ENCODE measurements at regions of chr2 and their contacts with region 1.

Region 1: DNA sequence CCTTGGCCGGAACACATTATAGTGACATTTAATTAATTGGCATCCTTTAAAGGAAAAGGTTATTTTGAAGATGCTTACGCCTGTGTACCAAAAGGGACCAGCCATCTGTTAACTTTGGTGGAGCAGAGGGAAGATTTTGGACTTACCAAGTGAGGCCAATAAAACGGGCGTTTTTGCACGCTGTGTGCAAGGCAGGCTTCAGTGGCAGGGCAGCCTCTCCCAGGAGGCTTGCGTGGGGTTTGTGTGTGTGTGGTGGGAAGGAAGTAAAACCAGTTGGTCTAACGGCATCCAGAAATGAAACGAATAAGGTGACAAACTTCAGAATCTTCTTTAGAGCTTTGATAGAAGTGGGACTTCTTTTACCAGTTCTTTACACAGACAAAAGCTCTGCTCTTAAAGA is 191.7 kb downstream of the PRKCE start:
- DNase-seq: no peak
- ATAC-seq: peak; percentile 76
- H3K4me3 ChIP-seq: peak overlapping the region; percentile 35; the same call in 1 of the 2 replicates
- H3K27ac ChIP-seq: peak overlapping the region; percentile 94
- H3K4me1 ChIP-seq: peaks cover 70% of the 10 kb centered on the region
- H3K27me3 ChIP-seq: no peaks in the 10 kb centered on the region
- CTCF ChIP-seq: no peak
- EP300 ChIP-seq: peak; percentile 91 to 97
- POLR2A ChIP-seq: no peak
- RAD21 ChIP-seq: no peak

Region 2: DNA sequence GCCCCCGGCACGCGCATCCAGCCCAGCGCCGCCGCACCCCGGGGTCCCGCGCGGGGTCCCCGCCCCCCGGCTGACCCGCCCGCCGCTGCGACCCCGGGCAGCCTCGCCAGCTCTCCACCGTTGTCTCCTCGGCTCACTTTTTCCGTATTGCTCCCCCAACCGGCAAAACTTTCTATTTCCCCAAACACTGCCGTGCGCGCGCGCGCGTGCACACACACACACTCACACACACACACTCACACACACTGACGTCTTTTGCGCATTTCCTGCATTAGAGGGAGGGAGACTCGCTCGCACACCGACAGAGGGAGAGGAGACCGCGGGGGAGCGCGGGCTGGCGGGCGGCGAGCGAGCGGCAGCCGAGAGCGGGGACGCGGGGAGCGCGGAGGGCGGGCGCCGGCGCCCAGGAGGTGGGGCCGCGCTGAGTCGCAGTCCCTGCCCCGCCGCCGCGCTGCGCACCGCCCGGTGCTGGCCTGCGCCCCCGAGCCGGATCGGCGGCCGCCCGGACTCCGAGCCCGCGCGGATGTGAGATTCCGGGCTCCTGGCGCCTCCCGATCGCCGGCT is 192.2 kb before region 1 on chr2:
- CTCF ChIA-PET with region 1: interaction called, 10 read pairs
- POLR2A ChIA-PET with region 1: interaction called, 51 read pairs
- RAD21 ChIA-PET with region 1: interaction called, 60 read pairs
- SMC1A ChIA-PET with region 1: interaction called, 110 read pairs
- in situ Hi-C with region 1: no loop called
- intact Hi-C with region 1: no loop called
- DNase-seq: peak; percentile 76
- ATAC-seq: peak; percentile 79
- H3K4me3 ChIP-seq: peak overlapping the region; percentile 97
- H3K27ac ChIP-seq: peak overlapping the region; percentile 91
- H3K4me1 ChIP-seq: no peaks in the 10 kb centered on the region
- H3K27me3 ChIP-seq: no peaks in the 10 kb centered on the region
- CTCF ChIP-seq: peak; percentile 38 to 49 (median 48); a peak in 5 of 6 replicates
- EP300 ChIP-seq: peak; percentile 56 to 69; a peak in 1 of 4 replicates
- POLR2A ChIP-seq: peak; percentile 85
- RAD21 ChIP-seq: peak; percentile 57

Region 3: DNA sequence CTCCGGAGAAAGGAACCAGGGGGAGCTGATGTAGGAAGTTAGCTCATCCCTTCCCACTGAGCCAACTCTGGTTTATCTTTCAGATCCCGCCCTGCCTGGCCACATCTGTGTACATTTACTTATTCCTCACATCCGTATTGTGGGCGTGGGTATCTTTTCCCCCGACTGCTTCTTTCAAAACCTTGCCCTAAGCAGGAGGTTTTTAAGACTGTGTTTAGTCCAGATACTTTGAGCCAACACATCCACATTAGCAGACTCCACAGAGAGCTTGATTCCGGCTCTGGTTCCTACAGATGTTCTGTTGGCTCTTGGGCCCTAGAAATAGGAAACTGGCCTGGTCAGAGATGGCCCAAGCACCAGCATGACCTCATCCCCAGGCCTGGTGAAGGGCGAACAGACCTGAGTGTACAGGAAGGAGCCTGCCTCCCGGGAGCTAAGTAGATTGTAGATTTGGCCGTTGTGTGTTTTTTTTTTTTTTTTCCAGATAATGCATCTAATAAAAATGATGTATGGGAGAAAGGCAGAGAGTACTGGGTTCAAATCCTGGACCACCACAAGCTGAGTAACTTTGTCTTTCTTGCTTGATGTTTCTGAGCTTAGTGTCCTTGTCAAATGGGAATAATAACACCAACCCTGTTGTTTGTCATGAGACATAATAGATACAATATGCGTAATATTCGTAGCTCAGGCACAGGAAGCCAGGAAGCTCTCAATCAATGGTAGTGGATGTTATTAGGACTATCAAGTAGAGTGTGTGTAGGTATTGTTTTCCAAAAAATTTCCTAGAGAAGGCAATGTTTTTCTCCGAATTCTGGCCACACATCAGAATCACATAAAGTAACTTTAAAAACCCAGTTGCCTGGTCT is 99.4 kb before region 1 on chr2:
- CTCF ChIA-PET with region 1: no interaction called
- POLR2A ChIA-PET with region 1: no interaction called
- RAD21 ChIA-PET with region 1: no interaction called
- SMC1A ChIA-PET with region 1: no interaction called
- in situ Hi-C with region 1: no loop called
- intact Hi-C with region 1: no loop called
- DNase-seq: no peak
- ATAC-seq: no peak
- H3K4me3 ChIP-seq: no peak overlapping the region
- H3K27ac ChIP-seq: no peak overlapping the region
- H3K4me1 ChIP-seq: peaks cover 9% of the 10 kb centered on the region
- H3K27me3 ChIP-seq: no peaks in the 10 kb centered on the region
- CTCF ChIP-seq: no peak
- EP300 ChIP-seq: no peak
- POLR2A ChIP-seq: no peak
- RAD21 ChIP-seq: no peak

Region 4: GRCh38 chr2:45755585-45756335 is 87.4 kb before region 1 on chr2:
- CTCF ChIA-PET with region 1: no interaction called
- POLR2A ChIA-PET with region 1: no interaction called
- RAD21 ChIA-PET with region 1: no interaction called
- SMC1A ChIA-PET with region 1: no interaction called
- in situ Hi-C with region 1: no loop called
- intact Hi-C with region 1: no loop called
- DNase-seq: no peak
- ATAC-seq: no peak
- H3K4me3 ChIP-seq: no peak overlapping the region
- H3K27ac ChIP-seq: no peak overlapping the region
- H3K4me1 ChIP-seq: peaks cover 7% of the 10 kb centered on the region; the same call in 1 of the 2 replicates
- H3K27me3 ChIP-seq: no peaks in the 10 kb centered on the region
- CTCF ChIP-seq: no peak
- EP300 ChIP-seq: no peak
- POLR2A ChIP-seq: no peak
- RAD21 ChIP-seq: no peak

Region 5: GRCh38 chr2:45860136-45861121 is 17.3 kb after region 1 on chr2:
- CTCF ChIA-PET with region 1: interaction called, 20 read pairs
- POLR2A ChIA-PET with region 1: interaction called, 26 read pairs
- RAD21 ChIA-PET with region 1: interaction called, 111 read pairs
- SMC1A ChIA-PET with region 1: interaction called, 246 read pairs
- in situ Hi-C with region 1: no loop called
- intact Hi-C with region 1: loop called (anchors 2 kb)
- DNase-seq: no peak
- ATAC-seq: peak; percentile 81
- H3K4me3 ChIP-seq: peak overlapping the region; percentile 60
- H3K27ac ChIP-seq: peak overlapping the region; percentile 76
- H3K4me1 ChIP-seq: peaks cover 28% of the 10 kb centered on the region
- H3K27me3 ChIP-seq: no peaks in the 10 kb centered on the region
- CTCF ChIP-seq: no peak; a peak in 1 of 6 replicates
- EP300 ChIP-seq: peak in 1 of 2 experiments; percentile 21; a peak in 1 of 4 replicates
- POLR2A ChIP-seq: no peak
- RAD21 ChIP-seq: 0 out of 2 replicates have a peak, but pooled peaks have one; percentile 6

Region 6: GRCh38 chr2:45869165-45869501 is 26.0 kb after region 1 on chr2:
- CTCF ChIA-PET with region 1: interaction called, 6 read pairs
- POLR2A ChIA-PET with region 1: interaction called, 52 read pairs
- RAD21 ChIA-PET with region 1: interaction called, 85 read pairs
- SMC1A ChIA-PET with region 1: interaction called, 102 read pairs
- in situ Hi-C with region 1: no loop called
- intact Hi-C with region 1: no loop called
- DNase-seq: no peak
- ATAC-seq: no peak
- H3K4me3 ChIP-seq: no peak overlapping the region
- H3K27ac ChIP-seq: no peak overlapping the region
- H3K4me1 ChIP-seq: peaks cover 23% of the 10 kb centered on the region
- H3K27me3 ChIP-seq: no peaks in the 10 kb centered on the region
- CTCF ChIP-seq: no peak
- EP300 ChIP-seq: no peak
- POLR2A ChIP-seq: no peak
- RAD21 ChIP-seq: no peak

Region 7: DNA sequence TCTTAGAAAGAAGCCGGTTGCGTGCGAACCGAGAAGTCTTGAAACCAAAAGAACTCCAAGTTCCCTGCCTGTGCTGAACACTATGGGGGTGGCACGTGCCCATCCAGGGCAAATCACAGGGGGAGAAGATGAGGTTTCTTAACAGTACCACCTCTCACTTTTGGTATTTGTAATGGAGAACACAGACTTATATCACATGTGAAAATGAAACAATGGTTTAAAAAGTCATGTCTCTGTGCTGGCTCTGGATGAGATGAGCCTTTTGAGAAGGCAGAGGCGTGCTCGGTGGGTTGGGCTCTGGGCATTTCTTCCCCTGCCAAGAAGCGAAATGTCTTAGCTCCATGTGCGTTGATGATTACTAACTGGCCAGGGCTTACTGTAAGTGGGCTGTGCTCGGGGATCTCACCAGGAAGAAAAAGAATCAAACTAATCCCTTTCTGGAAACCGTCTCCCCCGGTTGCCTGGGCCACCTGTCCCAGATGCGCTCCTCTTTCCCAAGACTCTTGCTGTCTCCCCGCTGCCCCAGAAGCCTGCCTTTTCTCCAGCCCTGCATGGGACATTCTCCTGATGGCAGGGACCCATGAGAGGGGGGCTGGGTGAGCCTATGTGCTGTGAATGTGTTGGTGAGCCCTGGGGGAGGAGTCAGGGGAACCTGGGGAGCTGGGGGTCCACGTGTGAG is 61.3 kb after region 1 on chr2:
- CTCF ChIA-PET with region 1: interaction called, 12 read pairs
- POLR2A ChIA-PET with region 1: interaction called, 6 read pairs
- RAD21 ChIA-PET with region 1: interaction called, 13 read pairs
- SMC1A ChIA-PET with region 1: interaction called, 24 read pairs
- in situ Hi-C with region 1: no loop called
- intact Hi-C with region 1: no loop called
- DNase-seq: no peak
- ATAC-seq: peak; percentile 97
- H3K4me3 ChIP-seq: no peak overlapping the region
- H3K27ac ChIP-seq: peak overlapping the region; percentile 79
- H3K4me1 ChIP-seq: peaks cover 35% of the 10 kb centered on the region
- H3K27me3 ChIP-seq: no peaks in the 10 kb centered on the region
- CTCF ChIP-seq: no peak
- EP300 ChIP-seq: peak; percentile 52 to 54; a peak in 1 of 4 replicates
- POLR2A ChIP-seq: no peak
- RAD21 ChIP-seq: no peak

Region 8: GRCh38 chr2:45909663-45910191 is 66.6 kb after region 1 on chr2:
- CTCF ChIA-PET with region 1: interaction called, 12 read pairs
- POLR2A ChIA-PET with region 1: interaction called, 6 read pairs
- RAD21 ChIA-PET with region 1: interaction called, 13 read pairs
- SMC1A ChIA-PET with region 1: interaction called, 24 read pairs
- in situ Hi-C with region 1: no loop called
- intact Hi-C with region 1: no loop called
- DNase-seq: no peak
- ATAC-seq: peak; percentile 90
- H3K4me3 ChIP-seq: peak overlapping the region; percentile 13; the same call in 1 of the 2 replicates
- H3K27ac ChIP-seq: peak overlapping the region; percentile 66
- H3K4me1 ChIP-seq: peaks cover 35% of the 10 kb centered on the region
- H3K27me3 ChIP-seq: no peaks in the 10 kb centered on the region
- CTCF ChIP-seq: no peak
- EP300 ChIP-seq: peak; percentile 31 to 38; a peak in 2 of 4 replicates
- POLR2A ChIP-seq: no peak
- RAD21 ChIP-seq: 0 out of 2 replicates have a peak, but pooled peaks have one; percentile 18

Region 9: GRCh38 chr2:46569061-46569560 is 726.0 kb after region 1 on chr2:
- CTCF ChIA-PET with region 1: no interaction called
- POLR2A ChIA-PET with region 1: no interaction called
- RAD21 ChIA-PET with region 1: no interaction called
- SMC1A ChIA-PET with region 1: no interaction called
- in situ Hi-C with region 1: no loop called
- intact Hi-C with region 1: no loop called
- DNase-seq: peak; percentile 82
- ATAC-seq: peak; percentile 91
- H3K4me3 ChIP-seq: peak overlapping the region; percentile 41; the same call in 1 of the 2 replicates
- H3K27ac ChIP-seq: peak overlapping the region; percentile 97
- H3K4me1 ChIP-seq: peaks cover 89% of the 10 kb centered on the region
- H3K27me3 ChIP-seq: no peaks in the 10 kb centered on the region
- CTCF ChIP-seq: no peak
- EP300 ChIP-seq: peak in 1 of 2 experiments; percentile 47; a peak in 1 of 4 replicates
- POLR2A ChIP-seq: peak; percentile 63
- RAD21 ChIP-seq: no peak